A549 (cell line): ENCODE measurements at regions of chr15 and their contacts with region 1.

Region 1: DNA sequence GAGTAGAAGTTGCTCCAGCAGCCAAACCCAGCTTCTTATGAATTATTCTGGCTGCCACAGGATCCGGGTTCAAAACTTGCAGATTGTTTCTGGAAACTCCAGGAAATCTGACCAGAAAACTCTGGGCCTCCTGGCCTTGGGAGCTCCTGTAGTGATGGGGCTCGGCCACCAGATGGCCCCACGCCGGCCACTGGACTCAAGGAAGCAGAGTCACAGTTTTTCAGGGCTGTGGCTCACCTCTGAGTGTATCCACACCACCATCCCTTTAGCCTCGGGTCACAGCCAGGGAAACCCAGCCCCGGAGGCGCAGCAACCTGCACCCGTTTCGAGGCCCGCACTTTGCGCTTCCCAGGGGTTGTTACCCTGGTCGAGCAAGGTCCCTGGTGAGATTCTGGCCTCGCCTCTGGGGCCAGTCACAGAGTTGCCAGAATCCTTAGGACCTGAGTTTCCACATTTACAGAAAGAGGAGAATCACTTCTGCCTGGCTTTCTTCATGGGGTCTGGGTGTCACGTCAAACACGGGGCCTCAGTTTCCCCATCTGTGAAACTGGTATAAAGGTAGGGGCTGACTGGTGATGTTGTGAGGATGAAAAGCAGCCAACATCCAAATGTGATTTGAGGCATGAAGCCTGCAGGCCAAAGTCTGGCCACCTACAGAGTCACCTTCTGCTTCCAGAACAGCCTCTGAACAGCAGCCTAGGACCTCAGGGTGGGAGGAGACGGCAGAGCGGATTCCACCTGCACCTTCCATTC is 53.5 kb upstream of the LCTL start:
- DNase-seq: peak; percentile 83 to 92
- ATAC-seq: peak; percentile 87 to 95
- H3K4me3 ChIP-seq: no peak overlapping the region
- H3K27ac ChIP-seq: peak overlapping the region; percentile 69 to 81
- H3K4me1 ChIP-seq: peaks cover 18% of the 10 kb centered on the region
- CTCF ChIP-seq: peak; percentile 97
- EP300 ChIP-seq: no peak
- POLR2A ChIP-seq: no peak
- RAD21 ChIP-seq: peak; percentile 85 to 86

Region 2: DNA sequence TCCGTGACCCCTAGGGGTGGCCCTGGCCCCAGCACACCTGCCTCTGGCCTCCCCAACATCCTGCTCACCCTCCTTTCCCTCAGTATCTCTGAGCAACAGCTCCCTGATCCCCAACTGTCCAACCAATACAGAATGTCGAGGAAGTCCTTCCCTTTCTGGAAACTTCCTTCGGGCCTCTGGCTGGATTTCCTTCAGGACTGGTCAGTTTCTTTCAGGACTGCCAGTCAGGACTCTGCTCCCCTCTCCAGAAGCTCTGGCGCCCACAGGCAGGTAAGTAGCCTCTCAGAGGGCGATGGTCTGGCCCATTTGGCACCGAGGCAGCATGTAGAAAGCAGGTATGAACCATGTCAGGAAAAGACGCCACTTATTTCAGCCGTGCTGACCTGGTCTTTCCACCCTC is 416.8 kb before region 1 on chr15:
- CTCF ChIA-PET with region 1: no interaction called
- POLR2A ChIA-PET with region 1: no interaction called
- DNase-seq: no peak
- ATAC-seq: no peak
- H3K4me3 ChIP-seq: no peak overlapping the region
- H3K27ac ChIP-seq: no peak overlapping the region
- H3K4me1 ChIP-seq: no peaks in the 10 kb centered on the region
- CTCF ChIP-seq: no peak
- EP300 ChIP-seq: no peak
- POLR2A ChIP-seq: no peak
- RAD21 ChIP-seq: no peak

Region 3: DNA sequence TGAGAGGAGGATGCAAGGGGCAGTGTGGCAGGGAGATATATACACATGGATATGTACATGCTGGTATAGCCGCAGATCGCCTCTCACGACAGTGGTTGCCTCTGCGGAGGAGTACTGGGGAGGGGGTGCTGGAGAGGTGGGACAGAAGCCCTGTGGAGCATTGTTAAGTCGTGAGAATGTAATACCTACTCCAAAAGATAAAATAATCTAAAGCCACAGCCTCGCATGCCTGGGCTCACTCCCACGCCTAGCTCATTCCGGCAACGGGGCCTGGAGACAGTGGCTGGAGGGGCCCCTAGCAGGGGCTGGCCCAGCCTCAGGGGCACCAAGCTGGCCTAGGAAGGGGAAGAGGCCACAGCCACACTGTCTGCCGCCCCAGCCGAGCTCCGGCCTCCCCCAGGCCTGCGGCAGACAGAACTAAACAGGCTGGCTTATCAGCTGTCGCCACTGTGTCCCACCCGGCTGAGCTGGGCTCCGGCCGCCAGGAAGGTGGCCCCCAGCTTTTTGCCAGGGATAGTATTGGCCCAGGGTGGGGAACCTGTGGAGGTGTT is 11.5 kb after region 1 on chr15:
- CTCF ChIA-PET with region 1: interaction called, 67 read pairs
- POLR2A ChIA-PET with region 1: no interaction called
- DNase-seq: no peak
- ATAC-seq: no peak
- H3K4me3 ChIP-seq: no peak overlapping the region
- H3K27ac ChIP-seq: peak overlapping the region in 1 of 2 experiments; percentile 18; a peak in 1 of 6 replicates
- H3K4me1 ChIP-seq: no peaks in the 10 kb centered on the region
- CTCF ChIP-seq: no peak
- EP300 ChIP-seq: no peak
- POLR2A ChIP-seq: no peak
- RAD21 ChIP-seq: no peak

Region 4: GRCh38 chr15:66647358-66647757 is 28.0 kb after region 1 on chr15:
- CTCF ChIA-PET with region 1: interaction called, 12 read pairs
- POLR2A ChIA-PET with region 1: no interaction called
- DNase-seq: no peak
- ATAC-seq: peak in 1 of 2 experiments; percentile 8; a peak in 1 of 6 replicates
- H3K4me3 ChIP-seq: no peak overlapping the region
- H3K27ac ChIP-seq: no peak overlapping the region; a peak in 1 of 6 replicates
- H3K4me1 ChIP-seq: peaks cover 14% of the 10 kb centered on the region
- CTCF ChIP-seq: no peak
- EP300 ChIP-seq: no peak
- POLR2A ChIP-seq: no peak
- RAD21 ChIP-seq: no peak

Region 5: GRCh38 chr15:66692808-66693596 is 73.7 kb after region 1 on chr15:
- CTCF ChIA-PET with region 1: interaction called, 98 read pairs
- POLR2A ChIA-PET with region 1: no interaction called
- DNase-seq: no peak
- ATAC-seq: no peak
- H3K4me3 ChIP-seq: no peak overlapping the region
- H3K27ac ChIP-seq: no peak overlapping the region
- H3K4me1 ChIP-seq: peaks cover 2% of the 10 kb centered on the region
- CTCF ChIP-seq: no peak
- EP300 ChIP-seq: no peak
- POLR2A ChIP-seq: no peak
- RAD21 ChIP-seq: no peak

Region 6: DNA sequence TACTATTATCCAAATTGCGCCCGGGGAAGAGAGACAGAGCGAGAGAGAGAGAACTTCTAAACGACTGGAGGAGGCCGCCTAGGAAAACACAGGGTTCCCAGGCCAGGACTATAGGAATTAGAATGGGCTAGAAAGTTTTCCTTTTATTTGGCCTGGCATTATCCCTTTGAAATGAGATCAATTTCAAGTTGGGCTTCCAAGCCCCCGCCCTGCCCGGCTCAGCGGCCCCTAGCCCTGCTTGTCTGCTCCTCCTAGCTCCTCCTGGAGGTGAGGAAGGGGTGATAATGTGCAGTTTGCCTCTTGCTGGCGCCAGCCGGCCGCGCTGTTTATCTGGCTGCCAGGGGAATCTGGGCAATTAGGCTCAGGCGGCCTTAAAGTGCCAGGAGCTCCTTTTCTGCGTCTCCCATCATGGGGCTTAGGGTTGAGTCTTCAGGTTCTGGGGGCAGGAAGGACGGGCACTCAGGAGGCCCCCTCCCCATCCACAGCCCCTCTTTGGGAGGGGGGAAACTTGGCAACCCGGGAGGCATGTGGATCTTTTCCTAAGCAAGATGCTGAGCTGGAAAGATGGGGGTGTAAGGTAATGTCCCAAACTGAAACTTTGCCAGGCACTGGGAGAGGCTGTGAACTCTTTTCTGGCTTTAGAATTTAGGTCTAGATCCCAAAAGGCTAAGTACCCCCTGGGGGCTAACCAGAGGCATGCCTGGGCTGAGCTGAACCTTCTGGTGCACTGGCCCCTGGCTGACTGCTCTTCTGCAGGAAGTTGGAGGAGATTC is 88.2 kb after region 1 on chr15:
- CTCF ChIA-PET with region 1: interaction called, 98 read pairs
- POLR2A ChIA-PET with region 1: no interaction called
- DNase-seq: peak; percentile 63 to 73
- ATAC-seq: peak; percentile 31 to 70; a peak in 4 of 6 replicates
- H3K4me3 ChIP-seq: peak overlapping the region; percentile 90; the same call in 2 of the 3 replicates
- H3K27ac ChIP-seq: peak overlapping the region; percentile 47 to 95
- H3K4me1 ChIP-seq: peaks cover 76% of the 10 kb centered on the region
- CTCF ChIP-seq: peak; percentile 41
- EP300 ChIP-seq: no peak
- POLR2A ChIP-seq: no peak
- RAD21 ChIP-seq: peak; percentile 53 to 68

Region 7: GRCh38 chr15:66789029-66790025 is 170.0 kb after region 1 on chr15:
- CTCF ChIA-PET with region 1: interaction called, 15 read pairs
- POLR2A ChIA-PET with region 1: no interaction called
- DNase-seq: peak in 1 of 2 experiments; percentile 77
- ATAC-seq: peak; percentile 83
- H3K4me3 ChIP-seq: no peak overlapping the region
- H3K27ac ChIP-seq: 0 out of 6 replicates have a peak overlapping the region, but pooled peaks of 1 of the 2 experiments have one; percentile 6
- H3K4me1 ChIP-seq: peaks cover 19% of the 10 kb centered on the region; the same call in 2 of the 3 replicates
- CTCF ChIP-seq: peak; percentile 66
- EP300 ChIP-seq: no peak
- POLR2A ChIP-seq: no peak
- RAD21 ChIP-seq: peak; percentile 72 to 73